Ovary (tissue), 10 donors: ENCODE measurements at regions of chr19 and their contacts with region 1.

Region 1: DNA sequence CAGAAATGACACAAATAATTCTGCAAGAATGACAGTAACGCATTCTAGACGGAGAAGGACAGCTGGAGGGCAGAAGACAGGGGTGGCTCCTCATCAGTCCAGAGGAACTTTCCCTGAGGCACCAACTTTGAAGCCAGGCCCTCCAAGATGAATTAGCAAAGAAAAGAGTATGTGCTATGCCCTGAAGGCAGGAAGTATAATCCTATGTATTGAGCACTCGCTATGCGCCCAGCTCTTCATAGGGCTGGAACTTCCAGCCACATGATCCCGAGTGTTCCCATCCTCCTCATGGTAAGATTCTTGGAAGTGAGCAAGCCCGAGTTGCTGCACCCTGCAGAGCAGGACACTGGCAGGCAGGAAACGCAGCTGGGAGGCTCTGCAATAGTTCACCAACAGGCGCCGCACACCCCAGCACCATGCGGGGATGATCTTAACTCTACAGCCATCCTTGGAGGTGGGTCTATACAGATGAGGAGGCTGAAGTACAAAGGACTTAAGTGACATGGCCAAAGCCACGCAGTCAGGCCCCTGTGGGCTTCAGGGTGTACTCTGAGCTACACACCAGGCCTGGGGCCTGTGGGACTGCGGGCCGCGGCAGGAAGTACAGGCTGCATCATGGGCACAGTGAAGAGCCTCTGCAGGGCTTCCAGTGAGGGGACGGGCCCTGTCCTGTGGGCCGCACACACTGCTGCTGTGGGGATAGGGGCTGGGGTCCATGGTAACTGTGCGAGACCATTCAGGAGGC is 25.2 kb downstream of the C19orf47 start:
- DNase-seq: peak in 1 of 5 donors; percentile 16
- H3K4me3 ChIP-seq: no peak overlapping the region
- H3K27ac ChIP-seq: no peak overlapping the region
- H3K4me1 ChIP-seq: no peaks in the 10 kb centered on the region
- H3K27me3 ChIP-seq: no peaks in the 10 kb centered on the region
- CTCF ChIP-seq: no peak
- EP300 ChIP-seq: no peak
- POLR2A ChIP-seq: no peak

Region 2: DNA sequence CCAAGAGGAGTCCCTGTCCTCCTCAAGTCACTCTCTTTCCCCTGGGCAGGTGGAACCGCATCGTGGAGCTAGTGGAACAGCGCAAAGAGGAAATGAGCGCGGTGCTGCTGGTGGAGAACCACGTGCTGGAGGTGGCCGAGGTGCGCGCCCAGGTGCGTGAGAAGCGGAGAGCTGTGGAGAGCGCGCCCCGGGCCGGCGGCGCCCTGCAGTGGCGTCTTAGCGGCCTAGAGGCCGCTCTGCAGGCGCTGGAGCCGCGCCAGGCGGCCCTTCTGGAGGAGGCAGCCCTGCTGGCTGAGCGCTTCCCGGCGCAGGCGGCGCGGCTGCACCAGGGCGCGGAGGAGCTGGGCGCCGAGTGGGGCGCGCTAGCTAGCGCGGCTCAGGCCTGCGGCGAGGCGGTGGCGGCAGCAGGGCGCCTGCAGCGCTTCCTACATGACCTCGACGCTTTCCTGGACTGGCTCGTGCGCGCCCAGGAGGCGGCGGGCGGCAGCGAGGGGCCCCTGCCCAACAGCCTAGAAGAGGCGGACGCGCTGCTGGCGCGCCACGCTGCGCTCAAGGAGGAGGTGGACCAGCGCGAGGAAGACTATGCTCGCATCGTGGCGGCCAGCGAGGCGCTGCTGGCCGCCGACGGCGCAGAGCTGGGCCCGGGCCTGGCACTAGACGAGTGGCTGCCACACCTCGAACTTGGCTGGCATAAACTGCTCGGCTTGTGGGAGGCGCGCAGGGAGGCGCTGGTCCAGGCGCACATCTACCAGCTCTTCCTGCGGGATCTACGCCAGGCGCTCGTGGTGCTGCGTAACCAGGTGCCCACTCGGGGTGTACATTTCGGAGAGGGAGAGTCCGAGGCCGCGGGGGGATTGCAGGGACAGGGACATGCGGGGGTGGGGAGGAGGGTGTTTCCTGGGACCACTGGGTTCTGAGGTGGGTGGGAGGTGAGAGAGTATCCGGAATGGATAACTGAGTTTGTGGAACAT is 196.6 kb after region 1 on chr19:
- intact Hi-C with region 1: loop called in 1 of 4 experiments (anchors 10 kb)
- DNase-seq: no peak
- H3K4me3 ChIP-seq: no peak overlapping the region
- H3K27ac ChIP-seq: no peak overlapping the region
- H3K4me1 ChIP-seq: no peaks in the 10 kb centered on the region
- H3K27me3 ChIP-seq: no peaks in the 10 kb centered on the region
- CTCF ChIP-seq: no peak
- EP300 ChIP-seq: no peak
- POLR2A ChIP-seq: no peak